Kidney (tissue), 22 donors: ENCODE measurements at regions of chr11 and their contacts with region 1.

Region 1: GRCh38 chr11:130131961-130132850 is 27.4 kb upstream of the ST14 start:
- DNase-seq: peak in 4 of 5 donors; percentile 65 to 83 (median 73)
- H3K4me3 ChIP-seq: no peak overlapping the region
- H3K27ac ChIP-seq: no peak overlapping the region
- H3K4me1 ChIP-seq: no peaks in the 10 kb centered on the region
- H3K27me3 ChIP-seq: no peaks in the 10 kb centered on the region
- CTCF ChIP-seq: peak; percentile 87

Region 2: GRCh38 chr11:129922674-129923073 is 209.5 kb before region 1 on chr11:
- intact Hi-C with region 1: loop called (anchors 5 kb)
- DNase-seq: no peak
- H3K4me3 ChIP-seq: no peak overlapping the region
- H3K27ac ChIP-seq: no peak overlapping the region
- H3K4me1 ChIP-seq: no peaks in the 10 kb centered on the region
- H3K27me3 ChIP-seq: no peaks in the 10 kb centered on the region
- CTCF ChIP-seq: no peak

Region 3: GRCh38 chr11:130087294-130087926 is 44.8 kb before region 1 on chr11:
- intact Hi-C with region 1: no loop called
- DNase-seq: no peak
- H3K4me3 ChIP-seq: no peak overlapping the region
- H3K27ac ChIP-seq: no peak overlapping the region
- H3K4me1 ChIP-seq: peaks cover 0 to 5% (median 0%) of the 10 kb centered on the region in 3 donors
- H3K27me3 ChIP-seq: no peaks in the 10 kb centered on the region
- CTCF ChIP-seq: no peak